ENCODE measurements at regions of chr15 and their contacts with region 1.

Region 1: GRCh38 chr15:38589502-38589901 is 24.9 kb upstream of the RASGRP1 start:
- DNase-seq: peak; percentile 51
- H3K4me3 Mint-ChIP-seq: no peak overlapping the region
- H3K27ac Mint-ChIP-seq: no peak overlapping the region
- H3K4me1 Mint-ChIP-seq: peaks cover 33% of the 10 kb centered on the region
- H3K27me3 Mint-ChIP-seq: no peaks in the 10 kb centered on the region

Region 2: GRCh38 chr15:38610748-38611147 is 21.2 kb after region 1 on chr15:
- CTCF ChIA-PET with region 1: no interaction called
- intact Hi-C with region 1: loop called (anchors 2 kb)
- DNase-seq: peak; percentile 32
- H3K4me3 Mint-ChIP-seq: no peak overlapping the region
- H3K27ac Mint-ChIP-seq: peak overlapping the region; percentile 61
- H3K4me1 Mint-ChIP-seq: peaks cover 40% of the 10 kb centered on the region
- H3K27me3 Mint-ChIP-seq: no peaks in the 10 kb centered on the region